ENCODE measurements at regions of chr17 and their contacts with region 1.

Region 1: DNA sequence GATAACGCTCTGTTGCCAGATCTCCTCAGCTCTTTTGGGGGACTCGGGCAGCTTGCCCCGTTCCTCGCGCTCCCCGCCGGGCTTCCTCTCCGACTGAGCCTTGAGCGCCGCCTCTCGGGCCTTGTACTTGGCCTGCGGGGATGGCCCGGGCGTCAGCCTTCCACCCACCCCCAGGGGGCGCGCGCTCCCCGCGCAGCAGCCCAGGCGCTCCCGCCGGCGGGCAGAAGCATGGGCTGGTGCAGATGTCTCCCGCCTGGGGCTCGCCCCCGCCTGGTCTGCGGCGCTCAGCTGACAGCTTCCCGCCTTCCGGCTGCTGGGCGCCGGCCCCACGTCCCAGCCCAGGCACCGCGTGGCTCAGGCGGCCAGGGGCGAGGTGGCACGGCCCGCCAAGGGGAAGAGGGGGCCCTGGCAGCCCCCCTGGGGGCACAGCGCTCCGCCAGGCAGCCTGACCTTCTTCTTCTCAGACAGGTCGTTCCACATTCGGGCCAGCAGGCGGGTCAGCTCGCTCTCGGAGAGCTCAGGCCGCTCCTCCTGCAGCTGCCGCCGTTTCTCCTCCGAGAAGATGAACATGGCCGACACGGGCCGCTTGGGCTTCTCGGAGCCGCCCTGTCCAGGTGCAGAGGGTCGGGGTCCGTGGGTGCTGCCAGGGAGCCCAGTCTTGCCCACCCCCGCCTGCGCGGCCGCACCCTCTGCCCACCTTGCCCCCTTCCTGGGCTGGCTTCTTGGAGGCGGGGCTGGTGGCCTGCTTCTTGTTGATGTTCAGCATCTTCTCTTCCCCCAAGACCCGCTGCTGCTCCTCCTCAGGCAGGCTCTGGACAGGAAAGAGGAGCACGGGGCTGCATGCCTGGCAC is 8.9 kb downstream of the UBTF start:
- DNase-seq: peak; percentile 90 to 96
- ATAC-seq: peak; percentile 94 to 98 (median 96)
- H3K4me3 ChIP-seq: peak overlapping the region; percentile 25
- H3K27ac ChIP-seq: peak overlapping the region; percentile 71
- H3K4me1 ChIP-seq: peaks cover 15% of the 10 kb centered on the region
- H3K27me3 ChIP-seq: no peaks in the 10 kb centered on the region
- CTCF ChIP-seq: peak; percentile 99

Region 2: DNA sequence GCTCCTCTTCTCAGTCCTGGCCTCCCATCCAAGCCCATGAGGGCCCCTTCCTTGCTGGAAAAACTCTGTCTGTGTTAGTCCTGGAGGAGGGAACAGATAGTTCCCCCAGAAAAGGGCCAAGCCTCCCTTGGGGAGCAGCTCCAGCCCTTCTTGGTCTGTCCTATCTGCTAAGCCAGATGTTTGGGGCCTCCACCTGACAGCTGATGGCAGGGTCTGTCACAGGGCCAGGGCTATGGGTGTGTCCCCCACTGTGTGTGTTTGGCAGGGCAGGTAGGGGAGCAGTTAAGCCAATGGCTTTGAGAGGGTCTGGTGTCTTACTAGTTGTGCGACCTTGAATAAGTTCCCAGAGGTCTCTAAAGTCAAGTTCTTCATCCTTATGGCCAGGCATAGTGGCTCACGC is 71.0 kb after region 1 on chr17:
- intact Hi-C with region 1: no loop called
- DNase-seq: no peak
- ATAC-seq: no peak
- H3K4me3 ChIP-seq: no peak overlapping the region
- H3K27ac ChIP-seq: no peak overlapping the region
- H3K4me1 ChIP-seq: no peaks in the 10 kb centered on the region
- H3K27me3 ChIP-seq: no peaks in the 10 kb centered on the region
- CTCF ChIP-seq: no peak

Region 3: GRCh38 chr17:44324571-44325275 is 114.2 kb after region 1 on chr17 and contains the start of gene SLC25A39:
- intact Hi-C with region 1: loop called (anchors 2 to 5 kb)
- DNase-seq: peak; percentile 95 to 98
- ATAC-seq: peak; percentile 87 to 91 (median 90)
- H3K4me3 ChIP-seq: peak within 1 kb of the TSS; percentile 94
- H3K27ac ChIP-seq: peak within 1 kb of the TSS; percentile 81
- H3K4me1 ChIP-seq: peaks cover 9% of the 10 kb centered on the region
- H3K27me3 ChIP-seq: no peaks in the 10 kb centered on the region
- CTCF ChIP-seq: no peak
- total RNA-seq, gene SLC25A39: 36.4 to 57.8 (median 41.0) TPM

Region 4: DNA sequence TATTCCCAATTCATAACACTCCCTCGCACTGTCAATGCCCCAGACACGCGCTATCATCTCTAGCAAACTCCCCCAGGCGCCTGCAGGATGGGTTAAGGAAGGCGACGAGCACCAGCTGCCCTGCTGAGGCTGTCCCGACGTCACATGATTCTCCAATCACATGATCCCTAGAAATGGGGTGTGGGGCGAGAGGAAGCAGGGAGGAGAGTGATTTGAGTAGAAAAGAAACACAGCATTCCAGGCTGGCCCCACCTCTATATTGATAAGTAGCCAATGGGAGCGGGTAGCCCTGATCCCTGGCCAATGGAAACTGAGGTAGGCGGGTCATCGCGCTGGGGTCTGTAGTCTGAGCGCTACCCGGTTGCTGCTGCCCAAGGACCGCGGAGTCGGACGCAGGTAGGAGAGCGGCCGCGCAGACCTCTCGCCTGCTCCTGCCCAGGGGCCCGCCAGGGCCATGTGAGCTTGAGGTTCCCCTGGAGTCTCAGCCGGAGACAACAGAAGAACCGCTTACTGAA is 134.4 kb after region 1 on chr17 and contains the start of gene GRN:
- intact Hi-C with region 1: loop called (anchors 5 kb)
- DNase-seq: peak; percentile 89 to 93
- ATAC-seq: peak; percentile 97 to 99 (median 98)
- H3K4me3 ChIP-seq: peak within 1 kb of the TSS; percentile 84
- H3K27ac ChIP-seq: peak within 1 kb of the TSS; percentile 86
- H3K4me1 ChIP-seq: peaks cover 5% of the 10 kb centered on the region
- H3K27me3 ChIP-seq: no peaks in the 10 kb centered on the region
- CTCF ChIP-seq: no peak
- total RNA-seq, gene GRN: 37.2 to 61.0 (median 58.6) TPM

Measured in psoas muscle (tissue), 8 donors.